Psoas muscle (tissue), 8 donors: ENCODE measurements at regions of chr5 and their contacts with region 1.

Region 1: DNA sequence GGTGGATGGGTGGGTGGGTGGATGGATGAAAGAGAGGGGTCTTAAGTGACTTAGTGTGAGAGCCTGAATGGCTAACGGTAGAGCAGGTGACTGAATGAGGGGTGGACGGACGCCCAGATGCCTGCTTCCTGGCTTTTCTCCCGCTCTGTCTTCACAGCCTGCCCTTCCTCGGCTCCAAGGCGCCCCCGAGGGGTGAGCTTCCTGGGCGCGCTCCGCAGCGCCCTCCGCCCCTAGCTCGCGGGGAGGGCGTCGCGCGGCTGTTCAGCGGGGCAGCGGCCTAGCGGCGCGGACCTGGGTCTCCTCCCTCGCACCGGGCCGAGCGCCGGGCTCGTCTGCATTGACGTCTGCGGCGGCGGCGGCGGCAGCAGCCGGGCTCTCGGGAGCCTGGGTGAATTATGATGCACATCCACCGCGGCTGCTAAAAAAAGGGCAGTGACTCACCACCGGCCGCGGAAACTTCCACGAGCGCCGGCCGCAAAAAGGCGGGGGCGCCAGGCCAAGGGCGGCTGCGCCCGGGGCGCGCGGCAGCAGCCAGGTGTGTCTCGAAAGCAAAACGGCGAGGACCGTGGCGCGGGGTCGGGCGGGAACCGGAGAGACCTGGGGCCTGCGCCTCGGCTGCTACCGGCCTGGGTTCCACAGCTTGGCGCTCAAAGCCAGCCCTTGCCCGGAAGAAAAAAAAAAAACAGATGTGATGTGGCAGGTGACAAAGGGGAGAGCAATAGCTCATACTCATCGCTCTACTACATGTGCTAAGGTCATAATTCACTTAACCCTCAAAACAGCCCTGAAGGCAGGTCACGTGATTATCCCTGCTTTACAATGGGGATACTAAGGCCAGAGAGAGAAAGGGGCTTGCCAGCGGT is 143.0 kb upstream of the ADRA1B start:
- DNase-seq: peak; percentile 86 to 89
- ATAC-seq: peak; percentile 98 to 99 (median 98)
- H3K4me3 ChIP-seq: peak overlapping the region; percentile 58
- H3K27ac ChIP-seq: peak overlapping the region; percentile 82
- H3K4me1 ChIP-seq: peaks cover 5% of the 10 kb centered on the region
- H3K27me3 ChIP-seq: no peaks in the 10 kb centered on the region
- CTCF ChIP-seq: no peak

Region 2: GRCh38 chr5:159826351-159827214 is 53.3 kb after region 1 on chr5:
- intact Hi-C with region 1: loop called in 1 of 2 experiments (anchors 2 kb)
- DNase-seq: peak; percentile 76 to 89
- ATAC-seq: peak; percentile 97 to 98 (median 98)
- H3K4me3 ChIP-seq: no peak overlapping the region
- H3K27ac ChIP-seq: peak overlapping the region; percentile 91
- H3K4me1 ChIP-seq: peaks cover 24% of the 10 kb centered on the region
- H3K27me3 ChIP-seq: no peaks in the 10 kb centered on the region
- CTCF ChIP-seq: no peak